Activated CD8-positive, alpha-beta memory T cell treated with anti-CD3 and anti-CD28 coated beads, Interleukin-2, amount 10 ng/mL, durations not matched to agents 7 days and 5 days (primary cell): ENCODE measurements at regions of chr5 and their contacts with region 1.

Region 1: DNA sequence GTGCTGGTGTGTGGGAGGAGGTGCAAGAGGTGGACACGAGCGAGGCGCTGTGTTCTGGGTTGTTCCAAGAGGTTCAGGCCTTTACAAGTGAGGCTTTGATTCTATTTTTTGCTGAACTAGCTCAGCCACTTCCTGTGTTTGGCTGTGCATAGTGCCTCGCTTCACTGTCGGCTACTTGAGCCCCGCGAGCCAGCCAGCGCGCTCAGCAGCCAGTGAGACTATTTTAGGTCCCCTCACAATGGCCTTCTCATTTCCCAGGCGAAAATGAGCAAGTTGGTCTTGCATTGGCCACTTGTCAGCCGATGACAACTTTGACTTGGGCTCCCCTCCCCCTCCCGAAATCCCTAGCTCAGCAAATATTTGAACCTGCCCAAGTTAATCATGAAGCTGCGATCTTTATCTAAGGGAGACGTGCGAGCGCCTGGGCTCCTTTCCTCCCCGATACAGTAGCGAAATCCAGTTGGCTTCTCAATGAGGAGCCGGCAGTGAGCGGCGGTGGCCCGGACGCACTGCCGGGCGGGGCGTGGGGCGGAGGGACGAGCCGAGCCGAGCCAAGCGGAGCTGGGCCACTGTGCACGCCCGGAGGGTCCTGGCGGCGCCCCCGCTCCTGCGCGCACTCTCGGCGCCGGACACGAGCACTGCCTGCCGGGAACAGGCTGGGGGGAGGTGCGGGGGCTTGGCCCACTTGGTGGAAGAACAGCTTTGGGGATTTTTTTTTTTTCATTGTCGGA is 72.6 kb downstream of the PIK3R1 start:
- DNase-seq: peak; percentile 80
- ATAC-seq: peak; percentile 80
- H3K4me3 Mint-ChIP-seq: peak overlapping the region; percentile 87
- H3K27ac Mint-ChIP-seq: peak overlapping the region; percentile 95
- H3K4me1 Mint-ChIP-seq: peaks cover 86% of the 10 kb centered on the region
- H3K27me3 Mint-ChIP-seq: no peaks in the 10 kb centered on the region

Region 2: DNA sequence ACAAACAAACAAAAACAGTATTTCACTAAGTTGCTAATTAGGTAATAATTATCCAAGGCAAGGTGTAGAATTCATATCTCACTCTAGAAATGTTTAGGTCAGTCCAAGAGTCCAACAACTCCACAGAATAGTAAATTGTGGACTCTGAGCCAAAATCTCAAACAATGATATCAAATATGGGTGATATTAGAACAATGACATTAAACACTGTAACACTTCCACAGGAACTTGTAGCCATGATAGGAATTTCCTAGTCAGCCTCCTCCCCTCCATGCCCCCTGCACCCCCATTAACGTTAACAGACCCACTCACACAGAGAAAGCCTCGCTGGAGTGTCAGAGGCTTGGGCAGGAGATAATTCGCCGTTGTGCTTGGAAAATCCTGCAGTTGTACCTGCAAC is 377.6 kb before region 1 on chr5:
- CTCF ChIA-PET with region 1: no interaction called
- DNase-seq: no peak
- ATAC-seq: no peak
- H3K4me3 Mint-ChIP-seq: no peak overlapping the region
- H3K27ac Mint-ChIP-seq: no peak overlapping the region
- H3K4me1 Mint-ChIP-seq: no peaks in the 10 kb centered on the region
- H3K27me3 Mint-ChIP-seq: peaks cover 4% of the 10 kb centered on the region

Region 3: DNA sequence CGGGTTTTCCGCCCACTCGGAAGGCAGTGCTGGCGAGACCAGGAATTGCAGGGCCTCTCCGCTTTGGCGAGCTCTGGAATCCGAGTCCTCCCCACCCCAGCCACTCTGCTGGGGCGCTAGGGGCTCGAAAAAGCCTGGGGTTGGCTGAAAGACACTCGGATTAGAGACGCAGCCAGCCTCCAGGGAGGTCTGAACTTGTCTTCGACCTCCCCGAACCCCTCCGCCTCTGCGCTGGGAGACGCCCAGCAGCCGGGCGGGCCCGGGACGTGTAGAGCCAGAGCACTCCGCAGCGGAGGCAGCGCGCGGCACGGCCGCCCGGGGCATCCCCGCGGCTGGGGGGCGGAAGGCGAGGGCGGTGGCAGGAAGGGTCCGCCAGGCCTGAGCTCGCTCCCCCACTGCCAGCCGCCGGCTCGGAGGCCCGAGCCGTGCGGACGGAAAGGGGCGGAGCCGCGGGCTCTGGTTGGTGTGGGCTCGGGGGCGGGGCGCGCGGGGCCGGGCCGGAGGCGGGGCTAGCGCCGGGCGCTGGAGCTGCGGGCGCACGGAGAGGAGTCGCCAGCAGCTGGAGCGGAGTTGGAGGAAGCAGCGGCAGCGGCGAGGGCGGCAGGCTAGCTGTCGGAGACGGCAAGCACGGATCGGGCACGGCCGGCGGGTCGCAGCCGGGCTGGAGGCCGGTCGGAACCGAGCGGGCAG is 72.8 kb before region 1 on chr5 and contains the start of gene PIK3R1:
- CTCF ChIA-PET with region 1: interaction called, 11 read pairs
- DNase-seq: peak; percentile 94
- ATAC-seq: peak; percentile 84
- H3K4me3 Mint-ChIP-seq: peak within 1 kb of the TSS; percentile 86
- H3K27ac Mint-ChIP-seq: peak within 1 kb of the TSS; percentile 92
- H3K4me1 Mint-ChIP-seq: peaks cover 41% of the 10 kb centered on the region
- H3K27me3 Mint-ChIP-seq: no peaks in the 10 kb centered on the region
- total RNA-seq, gene PIK3R1: 78.4 to 84.7 TPM

Region 4: DNA sequence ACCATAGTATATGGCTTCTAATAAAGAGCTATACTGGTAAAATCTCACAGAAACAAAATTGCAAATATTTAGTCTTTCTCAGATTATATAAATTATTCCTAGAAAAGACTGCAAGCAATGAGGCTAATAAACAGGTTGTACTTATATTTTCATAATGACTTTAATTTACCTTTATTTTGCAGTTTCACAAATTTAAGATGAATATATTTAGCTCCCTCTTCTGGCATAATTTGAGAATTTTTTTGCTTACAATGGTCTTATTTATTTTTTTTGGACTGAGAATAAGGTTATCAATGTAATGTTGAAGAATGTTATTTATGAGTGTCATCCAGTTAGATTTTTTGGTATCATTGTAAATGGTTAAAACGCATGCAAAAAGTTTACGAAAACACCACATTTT is 15.9 kb before region 1 on chr5:
- CTCF ChIA-PET with region 1: interaction called, 20 read pairs
- DNase-seq: no peak
- ATAC-seq: no peak
- H3K4me3 Mint-ChIP-seq: no peak overlapping the region
- H3K27ac Mint-ChIP-seq: peak overlapping the region; percentile 71
- H3K4me1 Mint-ChIP-seq: peaks cover 82% of the 10 kb centered on the region
- H3K27me3 Mint-ChIP-seq: no peaks in the 10 kb centered on the region

Region 5: GRCh38 chr5:68303038-68303738 is 15.0 kb after region 1 on chr5:
- CTCF ChIA-PET with region 1: interaction called, 14 read pairs
- DNase-seq: no peak
- ATAC-seq: peak; percentile 48
- H3K4me3 Mint-ChIP-seq: no peak overlapping the region
- H3K27ac Mint-ChIP-seq: peak overlapping the region; percentile 53
- H3K4me1 Mint-ChIP-seq: peaks cover 53% of the 10 kb centered on the region
- H3K27me3 Mint-ChIP-seq: no peaks in the 10 kb centered on the region

Region 6: GRCh38 chr5:68378204-68378824 is 90.2 kb after region 1 on chr5:
- CTCF ChIA-PET with region 1: interaction called, 12 read pairs
- DNase-seq: peak; percentile 83
- ATAC-seq: peak; percentile 88
- H3K4me3 Mint-ChIP-seq: peak overlapping the region; percentile 3
- H3K27ac Mint-ChIP-seq: peak overlapping the region; percentile 91
- H3K4me1 Mint-ChIP-seq: peaks cover 72% of the 10 kb centered on the region
- H3K27me3 Mint-ChIP-seq: no peaks in the 10 kb centered on the region

Region 7: DNA sequence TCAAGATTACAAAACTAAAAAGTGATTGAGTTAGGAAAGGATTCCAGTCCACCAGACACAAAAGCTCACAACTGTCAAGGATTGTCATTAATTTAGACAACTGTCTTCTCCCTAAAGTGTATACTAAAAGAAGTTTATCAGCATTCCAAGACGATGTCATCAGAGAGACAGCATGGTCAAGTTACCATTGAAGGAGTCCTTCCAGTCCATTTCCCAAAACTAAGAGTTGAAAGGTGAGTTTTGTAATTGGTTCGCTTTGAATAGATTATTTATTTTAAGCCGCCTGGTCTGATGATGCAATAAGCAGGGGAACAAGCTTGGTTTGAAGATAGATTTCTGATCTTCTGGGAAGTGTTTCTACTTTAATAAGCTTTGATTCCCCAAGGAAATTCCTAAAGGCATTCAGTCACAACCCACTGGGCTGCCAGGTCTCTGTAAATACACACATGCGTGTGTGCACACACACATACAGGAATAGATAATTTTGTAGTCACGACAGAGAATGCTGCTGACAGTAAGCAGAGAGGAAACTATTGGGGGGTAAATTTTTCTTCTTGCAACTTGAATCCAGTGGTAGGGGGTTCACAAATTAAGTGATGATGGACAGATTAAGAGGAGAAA is 162.2 kb after region 1 on chr5:
- CTCF ChIA-PET with region 1: interaction called, 13 read pairs
- DNase-seq: no peak
- ATAC-seq: no peak
- H3K4me3 Mint-ChIP-seq: no peak overlapping the region
- H3K27ac Mint-ChIP-seq: no peak overlapping the region
- H3K4me1 Mint-ChIP-seq: no peaks in the 10 kb centered on the region
- H3K27me3 Mint-ChIP-seq: no peaks in the 10 kb centered on the region

Region 8: GRCh38 chr5:68460147-68460798 is 172.1 kb after region 1 on chr5:
- CTCF ChIA-PET with region 1: interaction called, 55 read pairs
- DNase-seq: peak; percentile 64
- ATAC-seq: peak; percentile 60
- H3K4me3 Mint-ChIP-seq: no peak overlapping the region
- H3K27ac Mint-ChIP-seq: no peak overlapping the region
- H3K4me1 Mint-ChIP-seq: peaks cover 20% of the 10 kb centered on the region
- H3K27me3 Mint-ChIP-seq: no peaks in the 10 kb centered on the region